ENCODE measurements at regions of chr2 and their contacts with region 1.

Region 1: DNA sequence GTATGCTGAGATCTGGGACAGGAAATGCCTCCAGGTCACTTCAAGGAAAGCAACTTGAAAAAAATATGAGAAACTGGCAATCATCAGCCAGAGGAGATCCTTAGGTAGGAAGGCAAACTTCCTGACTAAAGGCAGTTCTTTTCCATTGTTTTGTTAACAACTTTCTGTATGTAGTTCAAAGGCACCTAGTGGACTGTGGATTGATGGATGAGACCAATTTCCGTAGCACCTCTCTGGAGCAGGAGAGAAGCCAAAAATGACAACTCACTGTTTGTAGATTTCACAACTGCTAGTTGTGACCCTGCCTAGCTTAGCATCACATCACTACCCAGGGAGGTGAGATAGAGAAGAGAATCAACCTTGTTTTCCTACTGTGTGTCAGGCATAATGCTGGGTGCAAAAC is 21.8 kb upstream of the NOSTRIN start:
- DNase-seq: no peak
- ATAC-seq: peak; percentile 13; the same call in 1 of the 3 replicates
- H3K4me3 ChIP-seq: no peak overlapping the region
- H3K27ac ChIP-seq: no peak overlapping the region
- H3K4me1 ChIP-seq: peaks cover 0 to 14% of the 10 kb centered on the region in 2 experiments; a peak in 2 of 5 replicates
- H3K27me3 ChIP-seq: no peaks in the 10 kb centered on the region
- CTCF ChIP-seq: no peak
- EP300 ChIP-seq: no peak
- POLR2A ChIP-seq: no peak
- RAD21 ChIP-seq: no peak

Region 2: GRCh38 chr2:168796583-168797285 is 16.1 kb after region 1 on chr2:
- CTCF ChIA-PET with region 1: no interaction called
- POLR2A ChIA-PET with region 1: interaction called, 17 read pairs
- in situ Hi-C with region 1: no loop called
- intact Hi-C with region 1: no loop called
- DNase-seq: peak; percentile 47 to 85 (median 64)
- ATAC-seq: peak; percentile 67
- H3K4me3 ChIP-seq: no peak overlapping the region
- H3K27ac ChIP-seq: peak overlapping the region; percentile 82
- H3K4me1 ChIP-seq: peaks cover 21 to 59% of the 10 kb centered on the region in 2 experiments
- H3K27me3 ChIP-seq: no peaks in the 10 kb centered on the region
- CTCF ChIP-seq: no peak
- EP300 ChIP-seq: peak; percentile 83
- POLR2A ChIP-seq: no peak
- RAD21 ChIP-seq: 0 out of 4 replicates have a peak, but pooled peaks of 1 of the 2 experiments have one; percentile 15

Measured in K562 (cell line).